Activated CD4-positive, alpha-beta T cell treated with anti-CD3 and anti-CD28 coated beads for 36 hours (primary cell): ENCODE measurements at regions of chr12 and their contacts with region 1.

Region 1: GRCh38 chr12:46372544-46373110 is at the start of gene SLC38A2:
- DNase-seq: peak; percentile 98
- ATAC-seq: peak; percentile 84
- H3K4me3 Mint-ChIP-seq: peak within 1 kb of the TSS; percentile 97
- H3K27ac Mint-ChIP-seq: peak within 1 kb of the TSS; percentile 99
- H3K4me1 Mint-ChIP-seq: peaks cover 55% of the 10 kb centered on the region
- H3K27me3 Mint-ChIP-seq: no peaks in the 10 kb centered on the region
- total RNA-seq, gene SLC38A2: 211 to 296 TPM

Region 2: DNA sequence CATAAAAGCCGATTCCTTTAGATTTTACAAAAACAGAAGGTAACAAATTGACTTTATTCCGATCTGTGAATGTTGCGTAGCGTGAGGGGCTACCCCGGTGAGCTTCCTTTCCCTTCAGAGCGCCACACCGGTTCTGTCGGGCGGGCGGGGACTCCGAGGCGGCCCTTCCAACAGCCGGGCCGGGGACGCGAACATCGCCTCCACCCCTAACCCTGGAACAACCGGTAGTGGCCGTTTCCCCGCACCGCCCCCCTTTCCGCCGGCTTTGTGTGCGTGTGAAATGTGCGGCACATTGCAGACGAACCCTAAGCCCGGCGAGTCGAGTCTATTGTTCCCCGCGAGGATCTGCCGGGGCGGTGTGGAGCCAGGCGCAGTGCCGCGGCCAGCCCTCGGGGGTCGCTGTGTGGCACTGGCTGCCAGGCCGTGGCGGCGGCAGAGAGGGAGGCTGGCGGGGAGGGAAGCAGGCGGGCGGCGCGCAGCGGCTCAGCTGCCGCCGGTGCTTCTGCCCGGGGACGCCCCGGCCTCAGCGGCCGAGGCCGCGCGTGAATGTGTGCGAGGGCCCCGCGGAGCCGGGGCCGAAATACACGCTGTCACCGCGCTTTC is 643.9 kb before region 1 on chr12:
- CTCF ChIA-PET with region 1: no interaction called
- POLR2A ChIA-PET with region 1: no interaction called
- intact Hi-C with region 1: loop called (anchors 2 to 5 kb)
- DNase-seq: peak; percentile 97
- ATAC-seq: peak; percentile 73
- H3K4me3 Mint-ChIP-seq: peak overlapping the region; percentile 98
- H3K27ac Mint-ChIP-seq: peak overlapping the region; percentile 99
- H3K4me1 Mint-ChIP-seq: peaks cover 16% of the 10 kb centered on the region
- H3K27me3 Mint-ChIP-seq: no peaks in the 10 kb centered on the region

Region 3: DNA sequence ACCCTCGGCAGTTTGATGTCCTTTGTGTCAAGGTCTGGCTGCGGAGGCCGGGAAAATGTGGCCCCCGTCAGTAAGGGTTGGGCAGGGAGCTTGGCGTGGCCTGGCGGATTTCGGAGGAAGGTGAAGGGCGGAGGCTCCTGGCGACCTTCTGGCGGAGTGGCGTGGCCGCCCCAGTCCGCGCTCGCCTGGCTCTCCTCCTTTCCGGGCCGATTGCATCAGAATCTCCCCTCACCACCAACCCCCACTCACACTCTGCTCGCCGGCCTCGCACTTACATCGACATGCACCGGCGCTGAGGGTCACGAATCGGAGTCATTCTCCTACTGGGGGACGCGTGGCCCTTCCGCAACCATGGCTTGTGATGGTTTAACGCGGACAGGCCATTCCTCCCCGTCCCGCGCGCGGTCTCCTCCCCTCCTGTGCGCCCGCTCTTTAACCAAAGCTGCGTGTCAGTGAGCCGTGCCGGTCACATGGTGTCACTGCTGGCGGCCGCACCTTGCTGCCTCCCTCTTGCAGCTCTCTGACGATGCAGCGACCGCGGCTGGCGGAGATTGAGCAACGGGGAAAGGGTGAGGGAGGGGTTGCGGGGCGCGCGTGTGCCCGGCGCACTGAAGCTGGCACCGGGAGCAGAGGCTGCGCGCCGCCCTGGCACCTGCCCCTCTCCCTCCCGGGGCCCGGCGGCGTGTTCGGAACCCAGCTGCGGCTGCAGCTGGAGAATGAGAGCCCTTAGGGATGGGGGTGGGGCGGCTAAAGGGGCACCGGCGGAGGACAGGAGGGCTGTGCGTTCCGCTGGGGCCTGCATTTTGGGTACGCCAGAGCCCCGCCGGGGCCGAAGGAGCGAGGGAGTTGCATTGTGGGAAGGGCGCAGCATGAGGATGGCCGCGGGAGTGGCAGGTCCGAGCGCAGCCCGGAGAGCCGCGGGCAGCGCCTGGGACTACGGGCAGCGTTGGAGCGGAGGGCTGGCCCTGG is 103.8 kb before region 1 on chr12 and contains the start of gene SLC38A1:
- CTCF ChIA-PET with region 1: no interaction called
- POLR2A ChIA-PET with region 1: interaction called, 18 read pairs
- intact Hi-C with region 1: loop called (anchors 1 to 2 kb)
- DNase-seq: peak; percentile 94
- ATAC-seq: peak; percentile 61
- H3K4me3 Mint-ChIP-seq: no peak within 1 kb of the TSS
- H3K27ac Mint-ChIP-seq: no peak within 1 kb of the TSS
- H3K4me1 Mint-ChIP-seq: peaks cover 30% of the 10 kb centered on the region
- H3K27me3 Mint-ChIP-seq: no peaks in the 10 kb centered on the region
- total RNA-seq, gene SLC38A1: 167 to 180 TPM

Region 4: GRCh38 chr12:46303039-46303666 is 69.5 kb before region 1 on chr12:
- CTCF ChIA-PET with region 1: no interaction called
- POLR2A ChIA-PET with region 1: no interaction called
- intact Hi-C with region 1: no loop called
- DNase-seq: peak; percentile 62
- ATAC-seq: peak; percentile 85
- H3K4me3 Mint-ChIP-seq: no peak overlapping the region
- H3K27ac Mint-ChIP-seq: no peak overlapping the region
- H3K4me1 Mint-ChIP-seq: no peaks in the 10 kb centered on the region
- H3K27me3 Mint-ChIP-seq: no peaks in the 10 kb centered on the region

Region 5: DNA sequence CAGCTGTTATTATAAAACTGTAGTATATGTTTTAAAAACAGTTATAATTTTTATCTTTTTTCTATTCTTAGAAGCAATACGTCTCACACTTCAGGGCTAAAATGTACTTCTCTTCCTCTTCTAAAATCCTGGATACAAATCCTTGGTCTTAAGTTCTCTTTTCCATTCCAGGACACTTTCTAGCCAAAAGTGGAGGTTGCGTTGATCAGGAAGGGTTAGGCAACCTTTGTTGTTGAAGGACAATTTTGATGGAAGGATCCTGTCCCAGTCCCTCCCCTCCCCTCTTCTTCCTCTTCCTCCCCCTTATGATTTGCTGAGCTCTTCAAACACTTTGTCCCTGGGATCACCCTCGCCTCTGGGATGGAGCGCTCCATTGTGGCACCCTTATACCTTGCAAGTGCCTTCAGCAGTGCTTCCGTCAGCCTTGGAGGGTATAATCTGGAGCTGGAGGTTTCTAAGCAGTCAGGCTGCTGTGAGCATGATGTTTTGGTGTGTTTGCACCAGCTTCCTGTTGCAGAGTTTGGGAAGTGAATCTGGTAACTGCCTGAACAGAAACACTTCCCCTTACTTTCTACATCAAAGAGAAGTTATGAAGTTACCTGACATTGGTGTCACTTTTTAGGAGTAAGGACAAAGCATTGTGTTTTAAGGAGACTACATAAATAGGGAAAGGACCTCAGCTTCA is 87.4 kb after region 1 on chr12:
- CTCF ChIA-PET with region 1: no interaction called
- POLR2A ChIA-PET with region 1: interaction called, 3 read pairs
- intact Hi-C with region 1: loop called (anchors 1 to 5 kb)
- DNase-seq: peak; percentile 17
- ATAC-seq: no peak
- H3K4me3 Mint-ChIP-seq: peak overlapping the region; percentile 46
- H3K27ac Mint-ChIP-seq: peak overlapping the region; percentile 88
- H3K4me1 Mint-ChIP-seq: peaks cover 56% of the 10 kb centered on the region
- H3K27me3 Mint-ChIP-seq: no peaks in the 10 kb centered on the region

Region 6: DNA sequence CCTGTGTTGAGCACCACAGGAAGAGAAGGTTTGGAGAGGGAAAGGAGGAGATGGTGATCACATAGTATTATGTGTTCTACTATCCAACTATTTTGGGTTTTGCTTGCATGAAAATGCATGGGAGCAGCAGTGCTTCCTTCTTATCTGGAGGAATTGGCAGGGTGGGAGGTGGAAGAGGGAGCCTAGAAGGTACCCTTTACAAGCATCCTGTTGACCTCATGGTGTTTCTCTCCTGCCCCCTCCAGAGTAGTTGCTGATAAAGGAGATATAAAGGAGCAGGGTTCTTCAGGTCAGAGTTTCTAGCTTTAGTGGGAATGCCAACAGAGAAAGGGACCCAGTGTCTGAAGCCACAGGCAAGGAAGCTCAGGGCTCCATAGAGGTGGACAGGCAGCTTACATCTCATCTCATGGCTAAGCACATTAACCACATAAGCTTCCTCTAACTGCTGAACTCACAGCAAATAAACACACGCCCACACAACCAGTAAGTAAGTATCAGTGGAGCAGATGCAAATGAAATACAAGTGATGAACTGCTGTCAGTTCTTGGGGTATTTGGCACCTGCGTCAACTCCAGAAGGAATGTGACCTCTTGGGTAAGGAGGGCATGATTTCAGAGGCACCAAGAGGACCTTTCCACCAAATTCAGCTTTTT is 174.1 kb after region 1 on chr12:
- CTCF ChIA-PET with region 1: no interaction called
- POLR2A ChIA-PET with region 1: interaction called, 3 read pairs
- intact Hi-C with region 1: loop called (anchors 1 to 2 kb)
- DNase-seq: peak; percentile 45
- ATAC-seq: peak; percentile 33
- H3K4me3 Mint-ChIP-seq: no peak overlapping the region
- H3K27ac Mint-ChIP-seq: peak overlapping the region; percentile 58
- H3K4me1 Mint-ChIP-seq: peaks cover 58% of the 10 kb centered on the region
- H3K27me3 Mint-ChIP-seq: no peaks in the 10 kb centered on the region

Region 7: DNA sequence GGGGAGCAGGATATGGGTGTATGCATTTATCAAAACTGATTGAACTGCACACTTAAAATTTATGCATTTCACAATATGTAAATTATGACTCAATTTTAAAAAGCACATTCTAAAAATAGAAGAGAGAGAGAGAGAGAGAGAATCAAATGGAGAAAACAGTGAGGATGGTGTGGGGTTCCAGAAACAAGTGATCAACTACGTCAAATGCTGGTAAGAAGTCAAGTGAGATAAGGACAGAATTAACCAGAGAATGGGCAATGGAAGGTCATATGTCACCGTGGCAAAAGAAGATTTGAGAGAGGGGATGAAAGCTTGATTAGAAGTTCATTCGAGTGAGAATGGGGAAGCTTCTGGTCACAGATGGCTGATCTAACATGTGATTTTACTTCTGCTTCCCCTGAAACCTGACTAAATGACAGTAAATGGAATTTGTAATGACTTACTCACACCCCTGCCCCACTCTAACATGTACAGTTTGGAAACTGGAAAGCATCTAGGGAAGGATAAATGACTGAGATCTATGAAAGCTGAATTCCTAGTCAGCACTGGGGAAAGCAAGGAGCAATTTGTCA is 983.6 kb after region 1 on chr12:
- CTCF ChIA-PET with region 1: no interaction called
- POLR2A ChIA-PET with region 1: no interaction called
- intact Hi-C with region 1: loop called in 1 of 2 experiments (anchors 10 kb)
- DNase-seq: peak; percentile 61
- ATAC-seq: peak; percentile 74
- H3K4me3 Mint-ChIP-seq: peak overlapping the region; percentile 58
- H3K27ac Mint-ChIP-seq: peak overlapping the region; percentile 100
- H3K4me1 Mint-ChIP-seq: peaks cover 86% of the 10 kb centered on the region
- H3K27me3 Mint-ChIP-seq: no peaks in the 10 kb centered on the region

Region 8: GRCh38 chr12:47819896-47820630 is 1447.4 kb after region 1 on chr12 and contains the start of gene HDAC7:
- CTCF ChIA-PET with region 1: no interaction called
- POLR2A ChIA-PET with region 1: no interaction called
- intact Hi-C with region 1: loop called in 1 of 2 experiments (anchors 5 kb)
- DNase-seq: peak; percentile 90
- ATAC-seq: peak; percentile 48
- H3K4me3 Mint-ChIP-seq: peak within 1 kb of the TSS; percentile 94
- H3K27ac Mint-ChIP-seq: peak within 1 kb of the TSS; percentile 99
- H3K4me1 Mint-ChIP-seq: peaks cover 68% of the 10 kb centered on the region
- H3K27me3 Mint-ChIP-seq: no peaks in the 10 kb centered on the region
- total RNA-seq, gene HDAC7: 331 to 385 TPM